Naive thymus-derived CD4-positive, alpha-beta T cell (primary cell): ENCODE measurements at regions of chr3 and their contacts with region 1.

Region 1: DNA sequence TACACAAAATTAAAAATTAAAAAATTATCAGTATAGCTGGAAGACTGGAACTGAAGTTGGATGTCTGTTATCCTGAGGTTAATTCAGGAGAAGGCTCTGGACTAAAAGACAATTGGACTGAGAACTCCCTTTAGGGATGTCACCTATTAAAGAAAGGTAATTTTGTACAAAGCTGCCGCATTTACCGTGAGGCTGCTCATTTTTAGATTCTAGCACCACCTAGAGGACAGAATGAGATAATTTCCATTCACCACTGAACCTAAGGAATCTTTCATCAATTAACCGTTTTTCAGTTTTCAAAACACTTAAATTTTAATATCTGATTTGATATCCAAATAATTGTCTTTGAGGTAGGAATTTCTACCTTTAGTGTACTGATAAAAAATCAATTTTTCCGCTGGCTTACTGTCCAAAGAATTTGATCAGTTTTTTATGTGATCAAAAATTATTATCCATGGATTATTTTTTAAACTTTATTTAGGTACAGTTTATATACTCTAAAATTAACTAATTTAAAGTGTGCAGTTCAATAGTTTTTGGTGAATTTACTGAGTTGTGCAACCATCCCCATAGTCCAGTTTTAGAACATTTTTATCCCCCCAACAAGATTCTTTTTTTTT is 106.7 kb upstream of the TNIK start:
- DNase-seq: peak in 7 of 9 donors; percentile 22 to 67 (median 54)
- ATAC-seq: peak; percentile 72
- H3K4me3 ChIP-seq: no peak overlapping the region
- H3K4me3 Mint-ChIP-seq: no peak overlapping the region
- H3K27ac ChIP-seq: no peak overlapping the region
- H3K27ac Mint-ChIP-seq: peak overlapping the region in 1 of 9 donors; percentile 44
- H3K4me1 ChIP-seq: peaks cover 0 to 4% of the 10 kb centered on the region in 2 donors
- H3K4me1 Mint-ChIP-seq: peaks cover 3 to 38% (median 6%) of the 10 kb centered on the region in 7 donors
- H3K27me3 ChIP-seq: no peaks in the 10 kb centered on the region
- H3K27me3 Mint-ChIP-seq: peaks cover 0 to 32% (median 0%) of the 10 kb centered on the region in 5 donors

Region 2: DNA sequence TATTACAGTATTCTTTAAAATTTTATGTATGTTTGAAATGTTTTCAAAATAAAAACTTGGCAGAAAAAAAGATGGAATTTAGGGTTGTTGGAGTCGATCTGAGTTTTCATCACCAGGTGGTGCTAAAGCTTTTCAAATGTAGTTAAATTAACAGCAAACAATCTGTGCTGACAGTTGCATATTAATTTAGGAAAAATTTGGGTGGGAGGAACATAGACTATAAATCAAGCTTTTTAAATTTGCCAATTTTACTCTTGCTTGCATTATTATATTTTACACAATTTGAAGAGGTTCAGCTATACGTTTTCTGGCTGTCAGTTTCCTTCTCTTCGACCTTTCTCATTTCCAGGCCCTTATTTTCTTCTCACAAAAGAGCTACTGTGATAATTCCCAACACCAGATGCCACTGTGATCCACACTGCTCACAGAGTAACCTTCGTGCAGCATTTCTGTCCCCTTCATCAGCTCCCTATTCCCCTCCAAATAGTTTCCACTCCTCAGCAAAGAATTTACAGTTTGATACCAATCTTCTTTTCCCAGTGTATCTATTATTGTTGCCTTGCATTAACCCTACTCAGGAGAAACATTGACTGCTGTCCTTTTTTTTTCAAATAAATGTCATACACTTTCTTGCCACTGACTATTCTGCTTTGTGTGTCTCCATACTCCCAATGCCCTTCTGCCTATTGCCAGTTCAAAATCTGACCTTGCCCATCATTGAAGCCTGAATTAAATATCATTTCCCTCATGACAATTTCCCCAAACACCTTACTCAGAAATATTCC is 605.1 kb before region 1 on chr3:
- CTCF ChIA-PET with region 1: interaction called, 4 read pairs
- POLR2A ChIA-PET with region 1: no interaction called
- intact Hi-C with region 1: loop called (anchors 1 kb)
- DNase-seq: peak in 5 of 9 donors; percentile 4 to 20 (median 14)
- ATAC-seq: no peak
- H3K4me3 ChIP-seq: no peak overlapping the region
- H3K4me3 Mint-ChIP-seq: no peak overlapping the region
- H3K27ac ChIP-seq: no peak overlapping the region
- H3K27ac Mint-ChIP-seq: peak overlapping the region in 1 of 9 donors; percentile 23
- H3K4me1 ChIP-seq: no peaks in the 10 kb centered on the region
- H3K4me1 Mint-ChIP-seq: no peaks in the 10 kb centered on the region
- H3K27me3 ChIP-seq: no peaks in the 10 kb centered on the region
- H3K27me3 Mint-ChIP-seq: peaks cover 0 to 23% (median 19%) of the 10 kb centered on the region in 5 donors

Region 3: DNA sequence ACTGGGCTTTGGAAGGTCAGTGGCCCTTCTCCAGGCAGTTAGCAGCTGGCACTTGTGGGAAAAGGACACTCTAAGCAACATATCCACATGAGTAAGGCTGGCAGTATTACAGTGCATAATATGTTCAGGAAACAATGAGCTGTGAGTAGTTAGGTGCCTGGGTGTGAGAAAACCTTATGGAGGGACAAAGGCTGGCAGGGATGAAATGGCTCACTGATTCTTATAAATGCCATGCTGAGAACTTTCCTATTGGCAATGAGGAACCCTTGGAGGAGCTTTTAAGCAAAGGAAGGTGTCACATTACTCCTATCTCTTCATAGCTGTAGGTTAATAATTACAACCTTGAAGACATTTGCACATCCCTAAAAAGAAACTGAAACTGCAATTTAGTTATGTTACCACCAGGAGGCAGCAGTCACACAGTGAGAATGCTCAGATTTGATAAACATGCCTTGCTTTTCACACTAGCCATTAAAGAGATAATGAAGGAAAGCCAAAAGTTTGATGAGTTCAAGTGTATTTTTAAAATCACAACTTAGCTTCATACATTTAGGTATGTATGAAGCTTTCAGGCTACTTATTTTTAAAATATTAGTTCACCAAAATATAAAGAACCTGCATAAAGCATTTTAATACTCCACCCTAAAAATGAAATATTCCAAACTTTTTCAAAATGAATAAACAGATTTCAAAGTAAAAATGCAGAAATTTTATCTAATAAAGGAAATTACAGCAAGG is 403.8 kb before region 1 on chr3:
- CTCF ChIA-PET with region 1: interaction called, 16 read pairs
- POLR2A ChIA-PET with region 1: interaction called, 3 read pairs
- intact Hi-C with region 1: loop called (anchors 1 kb)
- DNase-seq: peak in 7 of 9 donors; percentile 19 to 51 (median 47)
- ATAC-seq: peak; percentile 55
- H3K4me3 ChIP-seq: no peak overlapping the region
- H3K4me3 Mint-ChIP-seq: no peak overlapping the region
- H3K27ac ChIP-seq: no peak overlapping the region
- H3K27ac Mint-ChIP-seq: peak overlapping the region in 1 of 9 donors; percentile 56
- H3K4me1 ChIP-seq: no peaks in the 10 kb centered on the region
- H3K4me1 Mint-ChIP-seq: peaks cover 9 to 25% (median 19%) of the 10 kb centered on the region in 7 donors
- H3K27me3 ChIP-seq: no peaks in the 10 kb centered on the region
- H3K27me3 Mint-ChIP-seq: no peaks in the 10 kb centered on the region

Region 4: GRCh38 chr3:171328419-171329082 is 238.4 kb before region 1 on chr3:
- CTCF ChIA-PET with region 1: interaction called, 4 read pairs
- POLR2A ChIA-PET with region 1: no interaction called
- intact Hi-C with region 1: loop called (anchors 1 to 5 kb)
- DNase-seq: peak in 8 of 9 donors; percentile 26 to 68 (median 58)
- ATAC-seq: peak; percentile 93
- H3K4me3 ChIP-seq: no peak overlapping the region
- H3K4me3 Mint-ChIP-seq: peak overlapping the region in 9 of 10 donors; percentile 13 to 71 (median 46)
- H3K27ac ChIP-seq: no peak overlapping the region
- H3K27ac Mint-ChIP-seq: peak overlapping the region in 6 of 9 donors; percentile 48 to 83 (median 62)
- H3K4me1 ChIP-seq: peaks cover 12 to 17% of the 10 kb centered on the region in 2 donors
- H3K4me1 Mint-ChIP-seq: peaks cover 20 to 81% (median 71%) of the 10 kb centered on the region in 7 donors
- H3K27me3 ChIP-seq: no peaks in the 10 kb centered on the region
- H3K27me3 Mint-ChIP-seq: no peaks in the 10 kb centered on the region

Region 5: GRCh38 chr3:171772427-171773056 is 205.6 kb after region 1 on chr3:
- CTCF ChIA-PET with region 1: interaction called, 3 read pairs
- POLR2A ChIA-PET with region 1: no interaction called
- intact Hi-C with region 1: loop called in 1 of 2 experiments (anchors 1 kb)
- DNase-seq: peak in 7 of 9 donors; percentile 6 to 55 (median 36)
- ATAC-seq: peak; percentile 58
- H3K4me3 ChIP-seq: no peak overlapping the region
- H3K4me3 Mint-ChIP-seq: no peak overlapping the region
- H3K27ac ChIP-seq: no peak overlapping the region
- H3K27ac Mint-ChIP-seq: no peak overlapping the region
- H3K4me1 ChIP-seq: no peaks in the 10 kb centered on the region
- H3K4me1 Mint-ChIP-seq: peaks cover 0 to 9% (median 0%) of the 10 kb centered on the region in 7 donors
- H3K27me3 ChIP-seq: no peaks in the 10 kb centered on the region
- H3K27me3 Mint-ChIP-seq: peaks cover 0 to 29% (median 0%) of the 10 kb centered on the region in 5 donors